ENCODE measurements at regions of chr12 and their contacts with region 1.

Region 1: DNA sequence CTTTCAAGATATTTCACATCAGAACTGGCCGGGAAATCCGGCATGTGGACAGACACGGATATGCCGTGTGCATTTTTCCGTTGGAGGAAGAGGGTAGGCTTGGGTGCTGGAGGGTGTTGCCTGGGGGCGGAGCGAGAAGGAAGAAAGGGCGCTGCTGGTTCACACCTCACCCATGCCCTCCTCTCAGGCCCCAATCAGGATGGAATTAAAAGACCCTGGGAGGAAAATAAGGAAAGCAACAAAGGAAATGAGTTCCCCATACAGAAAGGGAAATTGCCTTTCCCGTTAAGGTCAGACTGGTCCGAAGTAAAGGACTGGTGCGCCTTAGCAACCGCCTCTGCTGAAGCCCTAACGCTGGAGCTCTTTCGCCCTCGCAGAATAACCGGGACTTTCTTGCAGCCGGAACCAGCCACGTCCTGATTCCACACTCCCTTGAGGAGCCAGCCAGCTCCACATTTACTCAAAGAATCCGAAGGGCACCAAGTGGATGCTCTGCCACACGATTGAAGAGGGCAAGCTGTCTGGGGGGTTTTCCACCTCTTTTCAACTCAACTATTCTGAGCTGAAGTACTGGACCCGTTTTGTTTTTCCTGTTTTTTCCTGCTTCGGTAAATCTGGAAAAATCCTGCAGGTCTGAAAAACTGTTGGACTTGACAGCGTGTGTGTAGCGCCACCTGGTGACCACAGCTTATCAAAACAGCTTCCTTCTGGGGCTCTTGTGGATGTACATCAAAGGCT is 37.7 kb upstream of the BCL2L14 start:
- DNase-seq: peak; percentile 87
- ATAC-seq: peak; percentile 92
- H3K4me3 ChIP-seq: peak overlapping the region; percentile 55
- H3K27ac ChIP-seq: peak overlapping the region; percentile 70
- H3K4me1 ChIP-seq: no peaks in the 10 kb centered on the region
- H3K27me3 ChIP-seq: peaks cover 2% of the 10 kb centered on the region
- CTCF ChIP-seq: peak; percentile 90
- POLR2A ChIP-seq: peak; percentile 58; the same call in 1 of the 2 replicates
- RAD21 ChIP-seq: peak; percentile 96

Region 2: DNA sequence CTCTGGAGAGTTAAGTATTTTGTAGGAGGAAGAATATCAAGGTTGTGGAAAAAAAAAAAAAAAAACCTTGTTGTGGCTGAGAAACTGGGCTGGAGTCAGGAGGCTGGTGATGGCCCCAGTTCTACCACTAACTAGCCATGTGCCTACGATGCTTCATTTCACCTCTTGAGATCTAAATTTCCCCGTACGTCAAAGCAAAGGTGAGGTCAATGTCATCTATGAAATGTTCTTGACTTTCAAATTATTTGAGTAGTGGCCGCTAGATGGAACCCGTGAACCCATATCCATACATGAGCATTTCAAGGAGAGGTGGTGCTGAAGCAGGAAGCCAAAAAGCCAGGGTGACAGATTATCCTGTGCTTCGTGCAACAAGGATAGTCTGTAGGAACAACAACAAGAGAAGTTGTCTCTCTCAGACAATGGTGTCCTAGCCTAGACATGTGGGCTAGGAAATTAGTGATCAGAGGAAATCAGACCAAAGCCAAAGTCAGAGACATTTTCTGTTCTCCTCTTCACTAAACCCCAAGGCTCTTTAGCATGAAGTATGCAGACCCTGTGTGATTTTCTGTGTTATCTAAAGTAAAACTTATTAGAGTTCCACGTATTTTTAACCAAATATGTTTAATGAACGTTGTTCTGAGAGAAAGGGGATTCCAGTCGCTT is 479.0 kb before region 1 on chr12:
- CTCF ChIA-PET with region 1: interaction called, 3 read pairs
- POLR2A ChIA-PET with region 1: no interaction called
- dilution Hi-C with region 1: loop called (anchors 25 kb)
- in situ Hi-C with region 1: no loop called
- intact Hi-C with region 1: loop called (anchors 1 kb)
- DNase-seq: peak; percentile 59
- ATAC-seq: peak; percentile 91
- H3K4me3 ChIP-seq: no peak overlapping the region
- H3K27ac ChIP-seq: no peak overlapping the region
- H3K4me1 ChIP-seq: peaks cover 3% of the 10 kb centered on the region; the same call in 1 of the 2 replicates
- H3K27me3 ChIP-seq: peaks cover 34% of the 10 kb centered on the region
- CTCF ChIP-seq: peak; percentile 61
- POLR2A ChIP-seq: no peak
- RAD21 ChIP-seq: peak; percentile 58

Region 3: GRCh38 chr12:11765817-11766794 is 266.9 kb before region 1 on chr12:
- CTCF ChIA-PET with region 1: no interaction called
- POLR2A ChIA-PET with region 1: no interaction called
- dilution Hi-C with region 1: no loop called
- in situ Hi-C with region 1: no loop called
- intact Hi-C with region 1: loop called (anchors 10 kb)
- DNase-seq: peak; percentile 70
- ATAC-seq: peak; percentile 57
- H3K4me3 ChIP-seq: no peak overlapping the region
- H3K27ac ChIP-seq: peak overlapping the region; percentile 94
- H3K4me1 ChIP-seq: peaks cover 38% of the 10 kb centered on the region
- H3K27me3 ChIP-seq: no peaks in the 10 kb centered on the region
- CTCF ChIP-seq: no peak
- POLR2A ChIP-seq: no peak
- RAD21 ChIP-seq: no peak

Region 4: GRCh38 chr12:12266873-12267741 is 234.1 kb after region 1 on chr12 and contains the start of gene LRP6:
- CTCF ChIA-PET with region 1: no interaction called
- POLR2A ChIA-PET with region 1: no interaction called
- dilution Hi-C with region 1: no loop called
- in situ Hi-C with region 1: no loop called
- intact Hi-C with region 1: loop called (anchors 2 kb)
- DNase-seq: peak; percentile 94
- ATAC-seq: peak; percentile 94
- H3K4me3 ChIP-seq: peak within 1 kb of the TSS; percentile 85
- H3K27ac ChIP-seq: peak within 1 kb of the TSS; percentile 97
- H3K4me1 ChIP-seq: peaks cover 3% of the 10 kb centered on the region
- H3K27me3 ChIP-seq: no peaks in the 10 kb centered on the region
- CTCF ChIP-seq: no peak
- POLR2A ChIP-seq: peak; percentile 94
- RAD21 ChIP-seq: no peak
- total RNA-seq, gene LRP6: 32.1 and 41.4 TPM in 2 replicates

Region 5: DNA sequence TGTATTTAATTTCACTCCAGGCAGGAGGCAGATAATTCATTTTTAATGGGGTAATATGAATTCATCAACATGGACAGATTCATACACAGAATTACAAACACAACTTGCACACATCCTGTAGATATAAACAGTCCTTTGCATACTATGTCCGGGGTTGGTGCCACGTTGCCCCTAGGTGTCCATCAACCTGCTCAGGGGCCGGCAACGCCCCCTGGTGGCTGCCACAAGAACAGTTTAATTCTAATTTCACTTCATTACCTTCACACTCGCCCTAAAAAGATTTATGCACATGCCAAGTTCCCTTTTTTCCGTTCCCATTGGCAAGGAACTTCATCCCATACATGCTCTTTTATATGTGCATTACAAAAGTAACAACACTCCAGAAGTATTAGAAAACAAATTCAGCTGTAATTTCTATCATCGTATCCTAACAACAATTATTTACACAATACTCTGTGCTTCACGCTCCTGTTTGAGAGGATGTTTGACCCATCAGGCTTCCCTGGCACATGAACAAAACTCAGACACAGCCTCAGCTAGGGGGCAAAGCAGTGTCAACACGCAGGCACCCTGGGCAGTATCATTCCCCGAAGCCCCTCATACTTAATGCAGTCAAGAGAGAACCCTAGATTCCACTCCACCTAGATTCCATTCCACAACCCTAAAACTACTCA is 301.5 kb after region 1 on chr12:
- CTCF ChIA-PET with region 1: interaction called, 4 read pairs
- POLR2A ChIA-PET with region 1: no interaction called
- dilution Hi-C with region 1: no loop called
- in situ Hi-C with region 1: no loop called
- intact Hi-C with region 1: loop called (anchors 2 kb)
- DNase-seq: peak; percentile 46
- ATAC-seq: peak; percentile 30; the same call in 1 of the 2 replicates
- H3K4me3 ChIP-seq: no peak overlapping the region
- H3K27ac ChIP-seq: no peak overlapping the region
- H3K4me1 ChIP-seq: peaks cover 2% of the 10 kb centered on the region; the same call in 1 of the 2 replicates
- H3K27me3 ChIP-seq: 0 out of 2 replicates have a peak, but pooled peaks cover 2% of the 10 kb centered on the region
- CTCF ChIP-seq: peak; percentile 74
- POLR2A ChIP-seq: no peak
- RAD21 ChIP-seq: peak; percentile 60

Measured in IMR-90 (cell line).